CD8-positive, alpha-beta T cell (primary cell): ENCODE measurements at regions of chr10 and their contacts with region 1.

Region 1: DNA sequence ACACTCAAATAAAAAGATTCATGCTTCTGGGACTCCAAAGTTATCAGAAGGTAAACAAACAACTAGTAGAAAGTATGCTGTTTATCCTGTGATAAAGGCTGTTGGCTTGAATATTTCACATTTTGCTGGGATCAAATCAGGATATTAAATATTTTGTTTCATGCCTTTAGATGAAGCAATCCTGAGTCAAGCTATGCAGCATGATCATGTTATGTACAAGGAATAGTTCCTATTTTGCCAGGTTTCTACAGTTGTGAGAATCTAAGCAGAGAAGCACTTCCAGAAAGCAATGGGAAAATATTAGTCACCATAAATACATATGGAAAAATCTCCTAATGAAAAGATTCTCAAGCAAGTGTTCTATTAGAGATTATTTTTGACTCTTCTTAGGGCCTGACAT is 262.8 kb upstream of the PCDH15 start:
- DNase-seq: no peak
- ATAC-seq: no peak
- H3K4me3 ChIP-seq: no peak overlapping the region
- H3K4me3 Mint-ChIP-seq: no peak overlapping the region
- H3K27ac ChIP-seq: no peak overlapping the region
- H3K27ac Mint-ChIP-seq: no peak overlapping the region
- H3K4me1 ChIP-seq: no peaks in the 10 kb centered on the region
- H3K4me1 Mint-ChIP-seq: no peaks in the 10 kb centered on the region
- H3K27me3 ChIP-seq: no peaks in the 10 kb centered on the region
- H3K27me3 Mint-ChIP-seq: no peaks in the 10 kb centered on the region
- CTCF ChIP-seq: no peak

Region 2: DNA sequence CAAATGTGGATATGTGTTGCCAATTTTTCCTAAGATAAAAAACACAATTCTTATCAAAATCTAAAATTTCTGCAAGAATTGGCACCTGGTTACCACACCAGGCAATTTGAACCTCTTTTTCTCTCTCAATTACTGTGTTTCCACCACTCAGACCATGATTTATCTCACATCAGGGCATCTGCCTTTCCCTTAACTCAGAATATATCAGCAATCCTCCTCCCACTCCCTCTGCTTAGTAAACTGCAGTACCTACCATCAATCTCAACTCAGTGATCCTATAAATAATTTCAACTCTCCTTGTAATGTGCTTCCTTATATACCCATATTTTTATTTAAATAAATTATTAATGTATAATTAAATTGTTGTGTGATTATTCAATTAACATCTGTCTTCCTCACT is 50.5 kb before region 1 on chr10:
- CTCF ChIA-PET with region 1: no interaction called
- POLR2A ChIA-PET with region 1: no interaction called
- intact Hi-C with region 1: loop called in 1 of 2 experiments (anchors 5 kb)
- DNase-seq: no peak
- ATAC-seq: no peak
- H3K4me3 ChIP-seq: no peak overlapping the region
- H3K4me3 Mint-ChIP-seq: no peak overlapping the region
- H3K27ac ChIP-seq: no peak overlapping the region
- H3K27ac Mint-ChIP-seq: no peak overlapping the region
- H3K4me1 ChIP-seq: no peaks in the 10 kb centered on the region
- H3K4me1 Mint-ChIP-seq: no peaks in the 10 kb centered on the region
- H3K27me3 ChIP-seq: no peaks in the 10 kb centered on the region
- H3K27me3 Mint-ChIP-seq: no peaks in the 10 kb centered on the region
- CTCF ChIP-seq: no peak

Region 3: GRCh38 chr10:55091691-55092328 is 28.0 kb after region 1 on chr10:
- CTCF ChIA-PET with region 1: no interaction called
- POLR2A ChIA-PET with region 1: no interaction called
- intact Hi-C with region 1: no loop called
- DNase-seq: no peak
- ATAC-seq: no peak
- H3K4me3 ChIP-seq: no peak overlapping the region
- H3K4me3 Mint-ChIP-seq: no peak overlapping the region
- H3K27ac ChIP-seq: no peak overlapping the region
- H3K27ac Mint-ChIP-seq: no peak overlapping the region
- H3K4me1 ChIP-seq: no peaks in the 10 kb centered on the region
- H3K4me1 Mint-ChIP-seq: no peaks in the 10 kb centered on the region
- H3K27me3 ChIP-seq: no peaks in the 10 kb centered on the region
- H3K27me3 Mint-ChIP-seq: no peaks in the 10 kb centered on the region
- CTCF ChIP-seq: no peak

Region 4: GRCh38 chr10:55174419-55174818 is 110.6 kb after region 1 on chr10:
- CTCF ChIA-PET with region 1: no interaction called
- POLR2A ChIA-PET with region 1: no interaction called
- intact Hi-C with region 1: no loop called
- DNase-seq: no peak
- ATAC-seq: no peak
- H3K4me3 ChIP-seq: no peak overlapping the region
- H3K4me3 Mint-ChIP-seq: no peak overlapping the region
- H3K27ac ChIP-seq: no peak overlapping the region
- H3K27ac Mint-ChIP-seq: no peak overlapping the region
- H3K4me1 ChIP-seq: no peaks in the 10 kb centered on the region
- H3K4me1 Mint-ChIP-seq: no peaks in the 10 kb centered on the region
- H3K27me3 ChIP-seq: no peaks in the 10 kb centered on the region
- H3K27me3 Mint-ChIP-seq: no peaks in the 10 kb centered on the region
- CTCF ChIP-seq: no peak